Gastrocnemius medialis (tissue), 4 donors: ENCODE measurements at regions of chr14 and their contacts with region 1.

Region 1: GRCh38 chr14:57268161-57269069 is at the starts of genes AP5M1 and EXOC5:
- DNase-seq: peak; percentile 86 to 90
- ATAC-seq: peak; percentile 91 to 94
- H3K4me3 ChIP-seq: peak within 1 kb of the TSS; percentile 70 to 98 (median 90)
- H3K27ac ChIP-seq: peak within 1 kb of the TSS; percentile 95 to 99 (median 98)
- H3K4me1 ChIP-seq: peaks cover 44 to 46% of the 10 kb centered on the region in 2 donors
- H3K27me3 ChIP-seq: no peaks in the 10 kb centered on the region
- CTCF ChIP-seq: peak in 3 of 5 experiments; percentile 8 to 20 (median 10)
- POLR2A ChIP-seq: peak; percentile 69 to 71
- total RNA-seq, gene AP5M1: 17.3 to 36.0 (median 27.7) TPM
- total RNA-seq, gene EXOC5: 34.6 to 61.9 (median 43.2) TPM

Region 2: DNA sequence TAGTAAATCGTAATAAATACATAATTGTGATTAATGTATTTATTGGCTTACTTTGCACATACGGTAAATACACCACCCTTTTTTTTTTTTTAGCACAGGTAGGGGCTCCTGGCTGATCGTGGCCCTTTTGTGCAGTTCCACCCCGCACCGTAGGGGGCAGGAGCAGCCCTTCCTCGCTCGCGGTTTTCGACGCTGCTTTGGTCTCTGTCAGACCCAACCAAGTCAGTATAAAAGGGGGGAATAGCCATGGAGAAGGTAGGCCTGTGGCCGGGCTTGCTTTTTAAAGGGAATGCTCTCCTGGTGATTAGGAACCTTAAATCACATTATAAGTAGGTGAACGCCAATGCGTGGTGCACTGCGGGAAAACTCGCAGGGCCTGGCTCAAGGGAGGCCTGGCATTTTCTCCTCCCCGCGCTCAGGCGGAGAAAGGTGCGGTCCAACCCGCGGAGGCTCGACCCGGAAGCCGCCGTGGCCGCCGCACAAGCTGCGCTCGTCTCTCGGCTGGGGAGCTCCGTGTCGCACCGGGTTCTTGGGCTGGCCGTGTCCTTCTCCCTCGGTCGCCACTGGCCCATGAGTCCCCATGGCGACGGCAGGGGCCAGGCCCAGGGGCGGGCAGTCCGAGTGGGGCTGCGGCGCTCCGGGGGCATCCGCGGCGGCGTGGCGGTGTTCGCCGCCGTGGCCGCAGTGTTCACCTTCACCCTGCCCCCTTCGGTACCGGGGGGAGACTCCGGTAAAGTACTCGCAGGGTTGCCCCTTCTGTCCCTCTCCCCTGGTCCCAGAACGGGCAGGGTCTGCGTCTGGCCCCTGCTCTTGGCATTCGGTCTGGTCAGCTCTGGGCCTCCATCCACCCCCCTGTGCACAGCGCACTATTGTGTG is 688.8 kb before region 1 on chr14 and contains the start of gene TMEM260:
- in situ Hi-C with region 1: no loop called
- intact Hi-C with region 1: loop called (anchors 5 kb)
- DNase-seq: peak; percentile 59 to 78
- ATAC-seq: peak; percentile 96 to 98
- H3K4me3 ChIP-seq: peak within 1 kb of the TSS; percentile 71 to 88 (median 80)
- H3K27ac ChIP-seq: peak within 1 kb of the TSS; percentile 79 to 90 (median 84)
- H3K4me1 ChIP-seq: peaks cover 29 to 32% of the 10 kb centered on the region in 2 donors
- H3K27me3 ChIP-seq: no peaks in the 10 kb centered on the region
- CTCF ChIP-seq: peak; percentile 80 to 95 (median 92)
- POLR2A ChIP-seq: peak; percentile 29 to 76
- total RNA-seq, gene TMEM260: 2.6 to 10.5 (median 5.3) TPM

Region 3: GRCh38 chr14:57390028-57390805 is 121.8 kb after region 1 on chr14 and contains the start of gene NAA30:
- in situ Hi-C with region 1: no loop called
- intact Hi-C with region 1: loop called (anchors 1 kb)
- DNase-seq: peak; percentile 89 to 90
- ATAC-seq: peak; percentile 91 to 92
- H3K4me3 ChIP-seq: peak within 1 kb of the TSS; percentile 82 to 99 (median 88)
- H3K27ac ChIP-seq: peak within 1 kb of the TSS; percentile 84 to 91 (median 88)
- H3K4me1 ChIP-seq: peaks cover 37 to 42% of the 10 kb centered on the region in 2 donors
- H3K27me3 ChIP-seq: no peaks in the 10 kb centered on the region
- CTCF ChIP-seq: peak in 1 of 5 experiments; percentile 19
- POLR2A ChIP-seq: peak; percentile 58 to 66
- total RNA-seq, gene NAA30: 30.9 to 53.7 (median 38.6) TPM